ENCODE measurements at regions of chr3 and their contacts with region 1.

Region 1: GRCh38 chr3:62622553-62623193 is 249.3 kb upstream of the FEZF2 start:
- DNase-seq: no peak
- H3K4me3 ChIP-seq: no peak overlapping the region
- CTCF ChIP-seq: peak; percentile 38

Region 2: GRCh38 chr3:62611562-62612240 is 11.0 kb before region 1 on chr3:
- CTCF ChIA-PET with region 1: interaction called, 25 read pairs
- POLR2A ChIA-PET with region 1: no interaction called
- DNase-seq: no peak
- H3K4me3 ChIP-seq: no peak overlapping the region
- CTCF ChIP-seq: no peak

Region 3: DNA sequence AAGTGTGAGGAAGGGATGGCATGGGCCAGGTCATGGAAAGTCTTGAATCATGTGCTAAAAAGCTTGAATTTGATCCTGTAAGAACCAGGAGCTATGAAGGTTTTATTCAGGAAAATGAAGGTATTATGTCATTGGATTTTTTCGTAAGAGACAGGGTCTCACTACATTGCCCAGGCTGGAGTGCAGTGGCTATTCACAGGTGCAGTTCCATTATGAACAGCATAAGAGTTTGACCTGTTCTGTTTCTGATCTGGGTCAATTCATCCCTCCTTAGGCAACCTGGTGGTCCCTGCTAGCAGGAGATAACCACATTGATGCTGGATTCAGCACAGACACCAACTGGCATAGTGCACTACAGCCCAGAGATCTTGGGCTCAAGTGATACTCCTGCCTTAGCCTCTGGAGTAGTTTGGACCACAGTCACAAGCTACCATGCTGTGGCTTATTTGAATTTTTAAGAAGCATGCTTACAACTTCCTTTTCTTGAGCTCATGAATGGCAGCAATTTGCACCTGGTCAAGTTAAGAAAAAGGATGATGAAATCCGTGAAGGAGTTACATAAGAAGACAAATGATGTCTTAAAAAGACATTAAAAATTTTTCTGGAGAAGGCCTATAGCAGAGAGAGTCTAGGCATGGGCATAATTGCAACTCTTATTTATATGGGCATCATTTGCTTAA is 173.4 kb after region 1 on chr3:
- CTCF ChIA-PET with region 1: no interaction called
- POLR2A ChIA-PET with region 1: no interaction called
- DNase-seq: no peak
- H3K4me3 ChIP-seq: no peak overlapping the region
- CTCF ChIP-seq: no peak

Region 4: GRCh38 chr3:63193629-63194028 is 571.0 kb after region 1 on chr3:
- CTCF ChIA-PET with region 1: interaction called, 67 read pairs
- POLR2A ChIA-PET with region 1: no interaction called
- DNase-seq: no peak
- H3K4me3 ChIP-seq: no peak overlapping the region
- CTCF ChIP-seq: peak; percentile 37

Region 5: DNA sequence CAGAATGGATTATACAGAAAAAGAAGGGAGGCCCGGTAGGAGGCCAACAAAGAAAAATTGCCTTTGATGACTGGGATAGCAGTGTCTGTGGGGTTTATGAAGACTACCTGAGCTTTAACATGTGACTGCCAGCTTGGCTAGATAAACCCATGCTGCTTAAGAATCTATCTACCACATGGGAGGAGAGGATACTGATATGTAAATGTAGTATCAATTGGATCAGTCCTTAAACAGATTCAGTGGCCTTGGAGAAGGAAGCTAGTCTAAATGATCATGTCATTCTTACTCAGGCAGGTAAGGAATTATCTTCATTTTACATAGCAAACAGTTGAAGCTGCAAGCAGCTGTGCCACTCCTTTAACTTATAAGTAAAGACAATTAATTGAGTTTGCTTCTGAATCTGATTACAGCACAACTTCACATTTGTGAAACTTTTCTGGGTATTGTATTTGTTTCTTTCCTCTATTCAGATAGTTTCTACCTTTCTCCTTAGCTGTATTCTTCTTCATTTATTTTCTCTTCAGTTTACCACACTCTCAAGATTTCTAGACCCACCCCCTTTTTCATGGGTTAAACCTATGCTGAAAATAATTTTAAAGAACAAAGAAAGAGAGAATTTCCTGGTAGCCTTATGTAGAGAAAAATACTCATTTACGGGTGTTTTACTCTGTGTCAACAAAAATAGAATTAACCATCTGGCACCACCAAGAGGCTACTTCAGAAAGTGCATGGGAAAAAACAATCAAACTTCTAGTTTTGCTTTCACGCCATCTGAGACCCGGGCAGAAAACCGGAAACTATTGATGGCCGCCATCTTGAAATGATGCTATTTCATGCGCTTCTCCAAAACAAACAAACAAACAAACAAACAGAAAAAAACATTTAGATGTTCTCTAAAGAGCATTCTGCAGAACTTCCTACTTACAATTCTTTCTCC is 605.7 kb after region 1 on chr3:
- CTCF ChIA-PET with region 1: interaction called, 61 read pairs
- POLR2A ChIA-PET with region 1: no interaction called
- DNase-seq: no peak
- H3K4me3 ChIP-seq: no peak overlapping the region
- CTCF ChIP-seq: peak; percentile 27

Region 6: DNA sequence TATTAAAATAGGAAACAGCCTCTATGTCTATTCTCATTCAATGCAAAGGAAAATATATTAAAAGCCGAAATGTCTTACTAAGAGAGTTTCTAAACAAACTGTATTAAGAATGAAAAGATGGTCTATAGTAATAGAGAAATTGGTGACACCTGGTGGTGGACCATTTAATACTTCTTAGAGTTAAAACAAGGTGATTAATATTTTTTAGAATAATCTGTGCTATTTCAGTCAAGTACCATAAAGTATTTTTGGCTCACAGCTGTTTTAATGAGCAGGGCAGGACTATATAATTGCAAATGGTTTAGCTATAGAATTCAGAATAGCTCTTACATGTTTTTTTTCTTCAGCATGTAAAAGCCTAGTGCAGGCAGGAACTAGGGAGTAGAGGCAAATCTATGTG is 711.2 kb after region 1 on chr3:
- CTCF ChIA-PET with region 1: interaction called, 11 read pairs
- POLR2A ChIA-PET with region 1: no interaction called
- DNase-seq: no peak
- H3K4me3 ChIP-seq: no peak overlapping the region
- CTCF ChIP-seq: no peak